ENCODE measurements at regions of chr16 and their contacts with region 1.

Region 1: DNA sequence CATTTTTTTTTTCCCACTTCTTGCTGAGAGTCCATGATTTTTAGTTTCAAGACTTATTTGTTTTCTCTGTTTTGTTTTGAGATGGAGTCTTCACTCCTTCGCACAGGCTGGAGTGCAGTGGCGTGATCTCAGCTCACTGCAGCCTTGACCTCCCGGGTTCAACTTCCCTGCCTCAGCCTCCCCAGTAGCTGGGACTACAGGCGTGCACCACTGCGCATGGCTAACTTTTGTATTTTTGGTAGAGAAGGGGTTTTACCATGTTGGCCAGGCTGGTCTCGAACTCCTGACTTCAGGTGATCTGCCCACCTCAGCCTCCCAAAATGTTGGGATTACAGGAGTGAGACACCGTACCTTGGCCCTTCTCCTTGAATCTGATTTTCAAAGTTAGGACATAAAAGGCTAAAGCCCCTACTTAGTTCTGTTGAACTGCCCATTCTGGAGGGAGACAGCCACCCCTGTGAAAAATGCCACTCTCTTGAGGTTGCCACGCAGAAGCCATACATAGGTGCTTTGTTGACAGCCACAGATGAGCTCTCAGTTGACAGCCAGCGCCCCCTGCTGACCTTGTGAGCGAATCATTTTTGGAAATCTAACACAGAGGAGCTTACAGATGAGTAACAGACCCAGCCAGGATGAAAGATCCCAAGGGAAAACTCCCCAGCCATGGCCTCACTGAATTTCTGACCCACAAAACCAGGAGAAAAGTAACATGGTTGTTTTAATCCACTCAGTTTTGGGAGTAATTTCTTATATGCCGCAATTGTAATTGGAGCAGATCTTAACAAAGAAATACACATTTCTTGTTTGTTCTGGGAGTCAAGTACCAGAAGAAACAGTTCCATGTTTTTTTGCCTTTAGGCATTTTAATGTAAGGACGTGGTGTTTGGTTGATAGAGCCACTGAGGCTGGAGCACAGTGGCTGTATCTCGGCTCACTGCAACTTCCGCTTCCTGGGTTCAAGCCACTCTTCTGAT is 38.8 kb downstream of the PKD1L3 start:
- DNase-seq: peak; percentile 91
- H3K4me3 ChIP-seq: no peak overlapping the region
- H3K27ac ChIP-seq: no peak overlapping the region
- H3K4me1 ChIP-seq: peaks cover 3% of the 10 kb centered on the region
- H3K27me3 ChIP-seq: peaks cover 0 to 3% of the 10 kb centered on the region in 2 experiments
- CTCF ChIP-seq: peak; percentile 76 to 79
- POLR2A ChIP-seq: no peak

Region 2: DNA sequence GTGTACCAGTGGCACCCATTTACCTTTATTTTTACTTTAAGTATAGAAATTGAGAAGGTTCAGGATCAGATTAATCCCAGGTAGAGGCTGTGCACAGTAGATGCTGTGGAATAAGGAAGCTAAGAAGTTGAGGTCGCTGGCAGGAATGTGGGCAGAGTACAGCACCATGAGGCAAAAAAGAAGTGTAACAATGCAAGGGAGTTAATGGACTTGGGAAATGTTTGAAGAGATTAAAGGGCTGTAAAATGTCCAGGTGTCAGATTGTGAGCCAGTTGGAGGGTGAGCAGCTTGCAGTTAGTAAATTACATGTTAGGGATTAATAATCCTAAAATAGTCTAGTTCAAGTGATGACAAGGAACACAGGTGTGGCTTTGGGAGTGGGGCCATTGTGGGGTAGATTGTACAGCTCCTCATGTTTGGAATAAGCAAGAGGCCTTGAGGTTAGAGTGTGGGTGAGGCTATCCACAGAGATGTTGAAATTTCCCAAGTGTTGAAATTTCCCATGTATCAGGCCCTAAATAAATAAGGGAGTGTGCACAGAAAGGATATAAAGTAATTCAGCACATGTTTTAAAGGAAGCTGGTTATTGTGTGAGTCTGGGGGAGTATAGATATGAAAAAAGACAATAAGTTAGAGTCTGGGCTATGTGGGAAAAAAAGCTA is 406.0 kb before region 1 on chr16:
- CTCF ChIA-PET with region 1: no interaction called
- POLR2A ChIA-PET with region 1: no interaction called
- dilution Hi-C with region 1: no loop called
- intact Hi-C with region 1: no loop called
- DNase-seq: no peak
- H3K4me3 ChIP-seq: no peak overlapping the region
- H3K27ac ChIP-seq: no peak overlapping the region
- H3K4me1 ChIP-seq: no peaks in the 10 kb centered on the region
- H3K27me3 ChIP-seq: peaks cover 0 to 3% of the 10 kb centered on the region in 2 experiments
- CTCF ChIP-seq: no peak
- POLR2A ChIP-seq: no peak

Region 3: GRCh38 chr16:71746442-71747046 is 214.8 kb before region 1 on chr16:
- CTCF ChIA-PET with region 1: interaction called, 5 read pairs
- POLR2A ChIA-PET with region 1: no interaction called
- dilution Hi-C with region 1: no loop called
- intact Hi-C with region 1: loop called (anchors 1 kb)
- DNase-seq: peak; percentile 47
- H3K4me3 ChIP-seq: no peak overlapping the region
- H3K27ac ChIP-seq: no peak overlapping the region
- H3K4me1 ChIP-seq: no peaks in the 10 kb centered on the region
- H3K27me3 ChIP-seq: no peaks in the 10 kb centered on the region
- CTCF ChIP-seq: peak; percentile 37 to 52
- POLR2A ChIP-seq: no peak

Region 4: DNA sequence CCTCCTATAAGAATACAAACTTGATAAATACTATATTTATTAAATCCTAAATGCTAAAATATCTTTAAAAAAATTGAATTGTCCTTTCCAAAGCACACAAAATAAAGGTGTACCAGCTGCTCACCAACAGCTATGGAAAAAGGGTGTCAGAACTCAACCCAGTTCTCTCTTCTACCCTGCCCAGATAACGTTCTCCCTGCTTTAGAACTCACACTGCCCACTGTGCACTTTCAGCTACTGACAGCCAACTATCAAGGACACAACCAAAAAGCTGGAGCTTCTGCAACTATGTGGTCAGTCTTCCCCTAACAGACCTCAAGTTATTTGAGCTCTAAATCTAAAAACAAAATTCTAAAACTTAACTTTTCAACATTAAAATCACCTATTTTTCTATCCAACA is 166.4 kb before region 1 on chr16:
- CTCF ChIA-PET with region 1: interaction called, 4 read pairs
- POLR2A ChIA-PET with region 1: no interaction called
- dilution Hi-C with region 1: no loop called
- intact Hi-C with region 1: loop called (anchors 5 kb)
- DNase-seq: no peak
- H3K4me3 ChIP-seq: no peak overlapping the region
- H3K27ac ChIP-seq: no peak overlapping the region
- H3K4me1 ChIP-seq: no peaks in the 10 kb centered on the region
- H3K27me3 ChIP-seq: no peaks in the 10 kb centered on the region
- CTCF ChIP-seq: no peak
- POLR2A ChIP-seq: no peak

Region 5: DNA sequence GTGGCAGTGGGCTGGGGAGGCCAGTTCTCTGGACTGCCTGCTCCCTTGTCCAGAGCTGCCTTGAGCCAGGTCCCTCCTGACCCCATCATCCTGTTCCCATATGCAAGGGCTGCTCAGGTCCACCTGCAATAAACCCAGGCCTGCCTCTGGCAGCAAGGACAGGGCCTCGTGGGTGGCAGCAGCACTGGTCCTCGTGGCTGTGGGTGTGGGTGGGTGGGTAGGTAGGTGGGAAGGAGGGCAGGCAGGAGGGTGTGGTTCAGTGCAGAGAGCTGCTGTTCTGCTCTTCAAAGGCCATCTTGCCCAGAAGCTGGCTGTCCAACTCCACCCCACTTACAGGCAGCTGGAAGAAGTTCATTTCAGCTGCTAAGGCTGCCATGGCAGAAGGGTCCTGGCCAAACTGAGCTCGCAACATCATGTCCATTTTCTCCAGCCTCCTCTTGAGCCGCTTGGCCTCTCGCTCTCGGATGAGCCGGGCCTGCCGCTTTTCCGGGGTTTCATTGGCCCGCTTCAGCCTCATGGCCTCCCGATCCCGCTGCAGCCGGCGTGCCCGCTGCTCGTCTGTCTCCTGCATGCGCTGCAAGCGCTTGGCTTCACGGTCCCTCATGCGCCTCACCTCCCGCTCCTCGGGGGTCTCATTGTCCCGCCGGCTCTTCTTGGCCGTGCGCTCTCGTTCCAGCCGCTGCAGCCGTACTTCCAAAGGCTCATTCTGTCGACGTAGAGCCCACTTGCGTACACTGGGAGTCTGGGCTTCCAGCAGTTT is 101.4 kb before region 1 on chr16:
- CTCF ChIA-PET with region 1: interaction called, 28 read pairs
- POLR2A ChIA-PET with region 1: interaction called, 3 read pairs
- dilution Hi-C with region 1: no loop called
- intact Hi-C with region 1: loop called (anchors 1 kb)
- DNase-seq: no peak
- H3K4me3 ChIP-seq: no peak overlapping the region
- H3K27ac ChIP-seq: no peak overlapping the region
- H3K4me1 ChIP-seq: no peaks in the 10 kb centered on the region
- H3K27me3 ChIP-seq: no peaks in the 10 kb centered on the region
- CTCF ChIP-seq: no peak
- POLR2A ChIP-seq: no peak

Region 6: GRCh38 chr16:71889147-71889546 is 72.2 kb before region 1 on chr16:
- CTCF ChIA-PET with region 1: interaction called, 212 read pairs
- POLR2A ChIA-PET with region 1: no interaction called
- dilution Hi-C with region 1: no loop called
- intact Hi-C with region 1: loop called (anchors 1 kb)
- DNase-seq: no peak
- H3K4me3 ChIP-seq: no peak overlapping the region
- H3K27ac ChIP-seq: no peak overlapping the region
- H3K4me1 ChIP-seq: peaks cover 12% of the 10 kb centered on the region
- H3K27me3 ChIP-seq: no peaks in the 10 kb centered on the region
- CTCF ChIP-seq: no peak
- POLR2A ChIP-seq: no peak

Region 7: DNA sequence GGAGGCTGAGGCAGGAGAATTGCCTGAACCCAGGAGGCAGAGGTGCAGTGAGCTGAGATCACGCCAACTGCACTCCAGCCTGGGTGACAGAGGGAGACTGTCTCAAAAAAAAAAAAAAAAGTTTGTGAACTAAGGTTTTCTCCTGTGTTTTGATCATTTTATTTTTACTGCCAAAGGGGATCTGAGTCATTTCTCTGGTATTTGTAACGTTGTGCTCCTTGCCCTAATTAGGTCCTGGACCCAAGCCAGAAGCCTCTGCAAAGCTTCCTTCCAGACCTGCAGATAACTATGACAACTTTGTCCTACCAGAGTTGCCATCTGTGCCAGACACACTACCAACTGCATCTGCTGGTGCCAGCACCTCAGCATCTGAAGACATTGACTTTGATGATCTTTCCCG is 34.0 kb before region 1 on chr16:
- CTCF ChIA-PET with region 1: interaction called, 22 read pairs
- POLR2A ChIA-PET with region 1: no interaction called
- dilution Hi-C with region 1: no loop called
- intact Hi-C with region 1: loop called (anchors 1 kb)
- DNase-seq: peak; percentile 90
- H3K4me3 ChIP-seq: no peak overlapping the region
- H3K27ac ChIP-seq: peak overlapping the region; percentile 75
- H3K4me1 ChIP-seq: peaks cover 55% of the 10 kb centered on the region
- H3K27me3 ChIP-seq: no peaks in the 10 kb centered on the region
- CTCF ChIP-seq: no peak
- POLR2A ChIP-seq: peak; percentile 27

Region 8: GRCh38 chr16:71979617-71980016 is 18.3 kb after region 1 on chr16:
- CTCF ChIA-PET with region 1: interaction called, 29 read pairs
- POLR2A ChIA-PET with region 1: no interaction called
- dilution Hi-C with region 1: no loop called
- intact Hi-C with region 1: no loop called
- DNase-seq: no peak
- H3K4me3 ChIP-seq: no peak overlapping the region
- H3K27ac ChIP-seq: no peak overlapping the region
- H3K4me1 ChIP-seq: no peaks in the 10 kb centered on the region
- H3K27me3 ChIP-seq: no peaks in the 10 kb centered on the region
- CTCF ChIP-seq: no peak
- POLR2A ChIP-seq: no peak

Measured in endothelial cell of umbilical vein (primary cell).